Dendritic cell treated with granulocyte-macrophage colony-stimulating factor and Interleukin-4, amounts not matched to agents 40 ng/mL and 50 ng/mL, for 4 days (primary cell): ENCODE measurements at regions of chr1 and their contacts with region 1.

Region 1: DNA sequence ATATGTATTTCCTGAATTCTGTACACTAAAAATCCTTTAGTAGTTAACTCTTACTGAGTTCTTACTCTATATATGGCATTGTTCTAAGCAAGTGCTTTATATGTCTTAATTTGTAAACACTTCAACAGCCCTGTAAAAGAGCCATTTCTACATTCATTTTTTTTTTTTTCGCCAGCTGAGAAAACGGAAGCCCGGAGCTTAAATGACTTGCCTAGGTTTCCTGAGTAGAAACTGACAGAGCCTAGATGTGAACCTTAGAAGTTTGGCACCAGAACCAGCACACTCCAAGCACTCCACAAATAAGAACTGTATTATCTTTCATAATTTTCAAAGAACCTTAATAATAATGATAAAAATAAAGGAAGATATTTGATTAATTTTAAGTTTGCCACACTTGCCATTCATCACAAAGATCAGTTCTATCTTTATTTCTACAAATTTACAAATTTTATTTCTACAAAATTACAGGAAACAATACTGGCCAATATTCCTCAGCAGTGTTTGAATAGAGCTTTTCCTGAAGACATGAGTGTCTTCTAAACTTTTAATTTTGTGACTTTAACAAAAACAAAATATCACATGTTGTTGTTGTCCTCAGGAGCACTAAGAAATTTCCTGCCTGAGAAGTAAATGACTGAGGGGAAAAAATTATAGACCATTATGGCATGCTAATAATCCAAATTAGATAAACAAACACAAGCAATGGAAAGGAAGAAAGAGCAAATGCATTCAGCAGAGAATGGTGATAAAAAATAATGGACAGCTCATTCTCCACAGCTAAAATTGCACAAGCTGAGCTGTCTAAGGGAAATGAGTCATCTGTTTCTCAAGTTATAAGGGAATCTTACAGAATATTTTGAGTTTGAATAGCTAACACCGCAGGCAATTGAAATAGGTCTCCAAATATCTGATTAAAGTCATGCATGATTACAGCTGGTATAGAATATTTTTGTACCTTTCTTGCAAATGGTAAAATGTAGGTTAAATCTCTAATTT is 71.2 kb downstream of the DPYD start:
- H3K4me3 Mint-ChIP-seq: peak overlapping the region; percentile 50
- H3K27ac Mint-ChIP-seq: peak overlapping the region; percentile 91
- H3K4me1 Mint-ChIP-seq: peaks cover 23% of the 10 kb centered on the region
- H3K27me3 Mint-ChIP-seq: no peaks in the 10 kb centered on the region

Region 2: DNA sequence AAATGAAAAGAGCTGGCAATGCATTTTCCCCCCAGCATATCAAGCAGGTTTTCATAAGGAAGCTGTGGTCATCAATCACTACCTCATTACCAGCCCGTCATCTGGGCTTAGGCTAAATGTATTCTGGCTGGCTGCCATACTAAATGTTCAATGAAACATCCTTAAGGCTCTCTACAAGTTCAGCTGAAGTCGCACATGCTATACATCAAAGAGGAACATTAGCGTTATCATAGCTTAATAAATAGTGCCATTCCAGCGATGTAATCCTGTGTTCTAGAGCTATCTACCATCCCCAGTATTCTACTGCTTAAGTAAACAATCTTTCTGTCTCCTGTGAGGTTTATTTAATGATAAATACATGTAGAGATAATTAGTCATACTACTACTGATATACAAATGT is 217.6 kb before region 1 on chr1:
- intact Hi-C with region 1: no loop called
- H3K4me3 Mint-ChIP-seq: no peak overlapping the region
- H3K27ac Mint-ChIP-seq: no peak overlapping the region
- H3K4me1 Mint-ChIP-seq: no peaks in the 10 kb centered on the region
- H3K27me3 Mint-ChIP-seq: no peaks in the 10 kb centered on the region

Region 3: DNA sequence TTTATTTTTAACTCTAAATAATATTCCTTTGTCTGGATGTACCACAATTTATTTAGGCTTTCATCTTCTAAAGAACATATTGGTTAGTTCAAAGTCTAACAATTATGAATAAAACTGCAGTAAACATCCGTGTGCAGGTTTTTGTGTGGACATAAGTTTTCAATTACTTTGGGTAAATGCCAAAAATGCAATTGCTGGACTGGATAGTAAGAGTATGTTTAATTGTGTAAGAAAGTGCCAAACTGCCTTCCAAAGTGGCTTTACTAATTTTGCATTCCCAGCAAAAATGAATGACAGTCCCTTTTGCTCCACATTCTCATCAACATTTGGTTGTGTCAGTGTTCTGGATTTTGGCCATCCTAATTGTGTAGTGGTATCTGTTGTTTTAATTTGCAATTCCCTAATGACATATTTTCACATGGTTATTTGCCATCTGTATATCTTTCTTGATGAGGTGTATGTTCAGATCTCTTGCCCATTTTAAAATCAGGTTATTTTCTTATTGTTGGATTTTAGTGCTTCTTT is 42.6 kb before region 1 on chr1:
- intact Hi-C with region 1: no loop called
- H3K4me3 Mint-ChIP-seq: no peak overlapping the region
- H3K27ac Mint-ChIP-seq: peak overlapping the region; percentile 20
- H3K4me1 Mint-ChIP-seq: peaks cover 42% of the 10 kb centered on the region
- H3K27me3 Mint-ChIP-seq: no peaks in the 10 kb centered on the region

Region 4: GRCh38 chr1:97901017-97901658 is 51.5 kb after region 1 on chr1:
- intact Hi-C with region 1: loop called (anchors 5 kb)
- H3K4me3 Mint-ChIP-seq: peak overlapping the region; percentile 66
- H3K27ac Mint-ChIP-seq: peak overlapping the region; percentile 88
- H3K4me1 Mint-ChIP-seq: peaks cover 52% of the 10 kb centered on the region
- H3K27me3 Mint-ChIP-seq: no peaks in the 10 kb centered on the region

Region 5: GRCh38 chr1:97920832-97921571 is 71.4 kb after region 1 on chr1 and contains the start of gene DPYD:
- intact Hi-C with region 1: loop called (anchors 2 kb)
- H3K4me3 Mint-ChIP-seq: peak within 1 kb of the TSS; percentile 95
- H3K27ac Mint-ChIP-seq: peak within 1 kb of the TSS; percentile 97
- H3K4me1 Mint-ChIP-seq: peaks cover 31% of the 10 kb centered on the region
- H3K27me3 Mint-ChIP-seq: no peaks in the 10 kb centered on the region

Region 6: GRCh38 chr1:97947695-97948094 is 98.1 kb after region 1 on chr1:
- intact Hi-C with region 1: no loop called
- H3K4me3 Mint-ChIP-seq: no peak overlapping the region
- H3K27ac Mint-ChIP-seq: no peak overlapping the region
- H3K4me1 Mint-ChIP-seq: no peaks in the 10 kb centered on the region
- H3K27me3 Mint-ChIP-seq: no peaks in the 10 kb centered on the region

Region 7: DNA sequence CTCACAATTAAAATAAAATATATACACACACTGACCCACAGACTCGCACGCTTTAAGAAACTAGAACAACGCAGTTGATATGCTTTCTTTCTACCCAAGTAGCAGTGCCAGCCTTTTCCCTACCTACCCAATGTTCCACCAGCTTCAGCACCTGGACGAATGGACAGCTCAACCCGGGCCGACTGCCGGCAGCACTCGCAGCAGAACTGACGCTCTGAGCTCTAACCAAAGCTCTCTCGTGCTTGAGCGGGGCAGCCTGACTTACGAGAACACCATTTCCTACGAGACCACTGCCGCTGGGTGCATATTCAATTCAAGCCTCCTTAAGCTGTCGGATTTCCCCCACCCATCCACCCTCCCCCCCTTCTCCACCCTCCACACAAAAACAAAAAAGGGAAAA is 198.6 kb after region 1 on chr1:
- intact Hi-C with region 1: loop called (anchors 10 kb)
- H3K4me3 Mint-ChIP-seq: peak overlapping the region; percentile 23
- H3K27ac Mint-ChIP-seq: no peak overlapping the region
- H3K4me1 Mint-ChIP-seq: peaks cover 48% of the 10 kb centered on the region
- H3K27me3 Mint-ChIP-seq: peaks cover 84% of the 10 kb centered on the region